ENCODE measurements at regions of chr1 and their contacts with region 1.

Region 1: GRCh38 chr1:229636042-229636441 is 10.0 kb downstream of the URB2 start:
- DNase-seq: no peak
- H3K4me3 ChIP-seq: no peak overlapping the region
- H3K27ac ChIP-seq: no peak overlapping the region
- H3K4me1 ChIP-seq: peaks cover 0 to 4% (median 1%) of the 10 kb centered on the region in 4 donors
- H3K27me3 ChIP-seq: no peaks in the 10 kb centered on the region
- CTCF ChIP-seq: no peak
- EP300 ChIP-seq: no peak
- POLR2A ChIP-seq: no peak

Region 2: GRCh38 chr1:229558571-229559335 is 77.3 kb before region 1 on chr1 and contains the start of gene ABCB10:
- in situ Hi-C with region 1: loop called in 1 of 4 experiments (anchors 10 kb)
- intact Hi-C with region 1: no loop called
- DNase-seq: peak; percentile 96
- H3K4me3 ChIP-seq: peak within 1 kb of the TSS; percentile 71 to 96 (median 86)
- H3K27ac ChIP-seq: peak within 1 kb of the TSS; percentile 93 to 99 (median 98)
- H3K4me1 ChIP-seq: peaks cover 10 to 34% (median 23%) of the 10 kb centered on the region in 4 donors
- H3K27me3 ChIP-seq: no peaks in the 10 kb centered on the region
- CTCF ChIP-seq: peak; percentile 63 to 89 (median 71)
- EP300 ChIP-seq: no peak
- POLR2A ChIP-seq: peak; percentile 56
- total RNA-seq, gene ABCB10: 4.5 to 22.5 (median 18.9) TPM